Posterior vena cava (tissue), 2 donors: ENCODE measurements at regions of chr16 and their contacts with region 1.

Region 1: GRCh38 chr16:16127469-16128116 is 95.7 kb downstream of the ABCC6 start:
- DNase-seq: peak; percentile 89

Region 2: GRCh38 chr16:15770512-15770911 is 357.1 kb before region 1 on chr16:
- intact Hi-C with region 1: loop called in 1 of 2 experiments (anchors 5 kb)
- DNase-seq: no peak

Region 3: GRCh38 chr16:15874745-15875314 is 252.8 kb before region 1 on chr16:
- intact Hi-C with region 1: loop called (anchors 1 to 5 kb)
- DNase-seq: no peak

Region 4: GRCh38 chr16:16175296-16175695 is 47.7 kb after region 1 on chr16:
- intact Hi-C with region 1: no loop called
- DNase-seq: no peak